Left cardiac atrium (tissue), 4 donors: ENCODE measurements at regions of chr4 and their contacts with region 1.

Region 1: DNA sequence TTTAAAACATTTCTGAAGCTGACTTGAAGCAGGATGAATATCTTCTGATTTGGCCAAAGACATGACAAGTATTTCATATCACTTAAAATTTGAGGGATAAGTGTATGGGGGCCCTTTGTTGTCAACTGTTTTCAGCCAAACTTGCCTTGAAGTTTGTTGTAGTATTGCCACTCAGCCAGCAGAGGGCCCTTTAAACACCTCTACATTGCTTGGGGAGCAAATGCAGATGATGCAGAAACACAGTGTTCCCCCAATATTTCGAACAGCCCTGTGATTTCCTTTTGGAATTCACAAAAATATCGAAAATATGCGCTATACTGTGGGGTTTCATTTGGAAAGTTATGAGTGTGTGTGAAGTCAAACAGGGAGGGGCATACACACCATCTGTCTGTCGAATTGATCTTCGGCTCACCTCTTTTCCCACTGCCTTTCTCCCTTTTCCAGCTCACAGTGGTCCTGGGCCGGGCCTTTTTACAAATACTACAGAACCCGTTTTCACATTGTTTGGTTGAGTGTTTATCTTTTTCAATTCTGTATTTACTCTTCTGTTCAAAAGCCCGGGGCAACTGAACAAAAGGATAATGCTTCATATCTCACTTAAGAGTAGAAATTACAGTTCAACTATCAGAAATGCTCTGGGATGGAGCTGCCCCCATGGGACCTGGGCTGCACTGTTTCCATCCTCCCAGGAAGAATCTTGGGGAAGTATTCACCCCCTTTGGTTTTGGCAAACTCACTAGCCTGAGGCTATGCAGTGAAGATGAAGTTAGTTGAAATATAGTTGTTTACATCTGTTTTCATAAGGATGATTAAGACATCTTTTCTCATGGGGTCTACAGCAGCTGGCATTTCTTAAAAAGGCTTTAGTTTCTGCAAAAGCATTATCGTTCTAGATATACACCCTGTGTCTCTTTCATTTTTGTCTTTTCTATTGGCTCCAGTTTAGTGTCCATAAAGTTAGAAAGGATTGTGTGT is 137.6 kb downstream of the EGF start:
- DNase-seq: no peak
- ATAC-seq: peak in 1 of 2 donors; percentile 34

Region 2: GRCh38 chr4:110196206-110196870 is 146.1 kb after region 1 on chr4:
- intact Hi-C with region 1: loop called in 1 of 2 experiments (anchors 5 kb)
- DNase-seq: peak; percentile 56
- ATAC-seq: peak; percentile 74 to 83

Region 3: GRCh38 chr4:110211007-110211769 is 160.9 kb after region 1 on chr4:
- intact Hi-C with region 1: loop called (anchors 2 to 5 kb)
- DNase-seq: no peak
- ATAC-seq: peak in 1 of 2 donors; percentile 37